ENCODE measurements at regions of chr1 and their contacts with region 1.

Region 1: DNA sequence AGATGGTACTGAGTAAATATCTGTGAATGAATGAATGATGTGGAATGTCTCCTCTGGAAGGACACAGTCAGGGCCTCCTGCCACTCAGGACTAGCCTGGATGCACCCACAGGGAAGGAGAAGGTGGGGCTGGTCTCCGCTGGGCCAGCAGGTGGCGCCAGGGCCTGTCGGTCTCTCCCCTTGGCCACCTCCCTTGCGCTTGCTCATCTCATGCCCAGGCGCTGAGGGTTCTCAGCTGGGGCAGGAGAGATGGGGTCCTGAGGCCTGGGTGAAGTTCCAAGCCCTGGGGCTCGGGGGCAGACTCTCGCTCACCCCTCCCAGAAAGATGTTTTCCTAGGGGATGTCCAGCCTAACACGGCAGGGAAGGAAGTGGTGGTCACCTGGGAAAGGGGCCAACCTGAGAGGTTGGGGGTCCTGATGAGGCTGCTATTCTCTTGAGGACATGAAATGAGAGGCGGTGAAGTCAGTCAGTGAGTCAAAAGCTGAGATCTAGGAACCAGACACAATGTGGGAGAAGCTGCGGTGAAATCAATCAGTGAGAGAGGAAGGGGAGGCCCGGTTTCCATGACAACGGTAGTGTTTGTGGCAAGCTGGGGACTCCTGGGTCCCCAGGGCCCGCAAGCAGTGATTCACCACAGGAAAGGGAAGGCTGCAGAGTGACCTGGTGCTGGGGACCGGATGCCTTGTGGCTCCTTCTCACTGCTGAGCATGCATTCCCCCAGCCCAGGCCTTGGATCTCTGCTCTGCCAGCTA is 14.6 kb upstream of the MEX3A start:
- DNase-seq: peak; percentile 78
- ATAC-seq: peak; percentile 99
- H3K4me3 ChIP-seq: no peak overlapping the region
- H3K27ac ChIP-seq: peak overlapping the region; percentile 73
- H3K4me1 ChIP-seq: peaks cover 9% of the 10 kb centered on the region
- H3K27me3 ChIP-seq: no peaks in the 10 kb centered on the region
- CTCF ChIP-seq: peak; percentile 98
- POLR2A ChIP-seq: peak; percentile 43; the same call in 1 of the 2 replicates
- RAD21 ChIP-seq: peak; percentile 97

Region 2: GRCh38 chr1:156140879-156141252 is 44.0 kb after region 1 on chr1:
- CTCF ChIA-PET with region 1: interaction called, 7 read pairs
- POLR2A ChIA-PET with region 1: no interaction called
- dilution Hi-C with region 1: no loop called
- in situ Hi-C with region 1: no loop called
- intact Hi-C with region 1: loop called (anchors 2 kb)
- DNase-seq: peak; percentile 48
- ATAC-seq: peak; percentile 30
- H3K4me3 ChIP-seq: no peak overlapping the region
- H3K27ac ChIP-seq: no peak overlapping the region
- H3K4me1 ChIP-seq: peaks cover 10% of the 10 kb centered on the region; the same call in 1 of the 2 replicates
- H3K27me3 ChIP-seq: no peaks in the 10 kb centered on the region
- CTCF ChIP-seq: no peak
- POLR2A ChIP-seq: peak; percentile 40
- RAD21 ChIP-seq: no peak